GM12878 (cell line): ENCODE measurements at regions of chr9 and their contacts with region 1.

Region 1: DNA sequence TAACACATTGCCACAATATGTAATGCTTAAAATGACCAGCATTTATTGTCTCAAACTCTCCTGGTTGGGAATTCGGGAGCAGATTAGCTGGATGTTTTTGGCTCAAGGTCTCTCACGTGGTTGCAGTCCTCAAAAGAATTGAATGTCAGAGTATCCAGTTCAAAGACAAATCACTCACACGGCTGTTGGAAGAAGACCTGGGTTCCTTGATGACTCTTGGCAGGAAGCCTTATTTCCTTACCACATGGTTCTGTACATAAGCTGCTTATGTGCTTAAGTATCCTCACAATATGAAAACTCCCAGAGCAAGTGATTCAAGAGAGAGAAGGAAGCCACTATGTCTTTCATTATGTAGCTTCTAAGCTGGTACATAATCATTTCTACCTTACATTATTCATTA is 230.3 kb upstream of the PTPRD start:
- DNase-seq: no peak
- ATAC-seq: no peak
- H3K4me3 ChIP-seq: no peak overlapping the region
- H3K27ac ChIP-seq: no peak overlapping the region
- H3K4me1 ChIP-seq: no peaks in the 10 kb centered on the region
- H3K27me3 ChIP-seq: no peaks in the 10 kb centered on the region
- CTCF ChIP-seq: no peak
- EP300 ChIP-seq: no peak
- POLR2A ChIP-seq: no peak
- RAD21 ChIP-seq: no peak

Region 2: DNA sequence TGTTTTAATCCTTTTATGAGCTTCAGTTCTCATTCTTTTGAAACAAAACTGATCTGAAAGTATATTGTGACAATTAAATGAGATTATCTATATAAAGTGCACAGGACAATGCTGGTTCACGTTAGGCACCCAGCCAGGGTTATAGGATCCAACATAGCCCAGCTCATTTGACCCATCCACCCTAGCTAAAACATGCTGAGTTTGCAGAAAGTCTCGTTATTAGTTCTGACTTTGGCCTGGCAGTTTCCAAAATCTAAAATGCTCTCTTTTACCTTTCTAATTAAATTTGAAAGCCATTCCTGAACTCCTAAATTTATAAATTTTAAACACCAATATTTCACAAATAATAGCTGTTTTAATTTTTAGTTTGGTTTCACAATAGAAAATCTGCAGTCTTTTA is 98.5 kb before region 1 on chr9:
- CTCF ChIA-PET with region 1: no interaction called
- POLR2A ChIA-PET with region 1: no interaction called
- RAD21 ChIA-PET with region 1: no interaction called
- SMC1A ChIA-PET with region 1: no interaction called
- in situ Hi-C with region 1: loop called (anchors 25 kb)
- intact Hi-C with region 1: no loop called
- DNase-seq: no peak
- ATAC-seq: no peak
- H3K4me3 ChIP-seq: no peak overlapping the region
- H3K27ac ChIP-seq: no peak overlapping the region
- H3K4me1 ChIP-seq: no peaks in the 10 kb centered on the region
- H3K27me3 ChIP-seq: no peaks in the 10 kb centered on the region
- CTCF ChIP-seq: no peak
- EP300 ChIP-seq: no peak
- POLR2A ChIP-seq: no peak
- RAD21 ChIP-seq: no peak